ENCODE measurements at regions of chr19 and their contacts with region 1.

Region 1: GRCh38 chr19:18251587-18252369 is 22.5 kb downstream of the IQCN start:
- DNase-seq: peak; percentile 67 to 84 (median 76)
- H3K4me3 ChIP-seq: no peak overlapping the region
- H3K27ac ChIP-seq: no peak overlapping the region
- H3K4me1 ChIP-seq: peaks cover 0 to 8% (median 3%) of the 10 kb centered on the region in 4 experiments
- H3K27me3 ChIP-seq: peaks cover 0 to 21% (median 4%) of the 10 kb centered on the region in 5 experiments

Region 2: GRCh38 chr19:18179957-18180356 is 71.8 kb before region 1 on chr19:
- CTCF ChIA-PET with region 1: interaction called, 13 read pairs
- POLR2A ChIA-PET with region 1: interaction called, 5 read pairs
- DNase-seq: peak in 2 of 3 donors; percentile 61 to 65
- H3K4me3 ChIP-seq: no peak overlapping the region
- H3K27ac ChIP-seq: no peak overlapping the region
- H3K4me1 ChIP-seq: peaks cover 0 to 23% (median 11%) of the 10 kb centered on the region in 4 experiments
- H3K27me3 ChIP-seq: no peaks in the 10 kb centered on the region

Region 3: DNA sequence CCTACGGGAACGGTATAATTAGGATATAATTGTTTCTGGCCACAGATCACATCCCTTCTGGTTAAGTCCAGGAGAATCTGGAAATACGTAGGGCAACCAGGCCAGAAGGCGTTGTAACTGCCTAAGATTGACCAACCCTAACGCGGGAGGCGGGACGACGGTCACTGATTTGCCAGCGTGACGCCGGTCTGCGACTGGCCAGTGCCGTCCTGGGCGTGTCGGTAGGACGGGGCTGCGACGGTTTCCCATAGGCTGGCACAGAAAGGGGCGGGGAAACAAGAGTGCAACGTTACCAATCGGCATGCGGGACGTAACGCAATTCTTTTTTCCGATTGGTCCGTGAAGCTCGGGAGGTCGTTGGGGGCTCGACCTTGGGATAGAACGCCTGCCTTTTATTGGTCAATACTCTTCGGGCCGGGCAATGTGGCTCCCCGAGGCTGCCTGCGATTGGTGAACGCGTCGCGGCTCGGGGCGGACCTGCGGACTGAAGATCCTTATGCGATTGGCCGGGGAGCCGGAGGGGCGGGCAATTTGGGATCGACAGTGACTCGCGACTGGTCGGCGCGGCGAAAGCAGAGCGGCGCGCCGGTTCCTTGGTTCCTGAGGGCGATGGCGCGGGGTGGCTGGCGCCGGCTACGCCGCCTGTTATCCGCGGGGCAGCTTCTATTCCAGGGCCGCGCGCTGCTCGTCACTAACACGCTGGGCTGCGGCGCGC is 58.9 kb before region 1 on chr19 and contains the start of gene MPV17L2:
- CTCF ChIA-PET with region 1: interaction called, 49 read pairs
- POLR2A ChIA-PET with region 1: interaction called, 3 read pairs
- DNase-seq: peak; percentile 100
- H3K4me3 ChIP-seq: peak within 1 kb of the TSS; percentile 55 to 89 (median 86)
- H3K27ac ChIP-seq: peak within 1 kb of the TSS; percentile 33 to 68
- H3K4me1 ChIP-seq: peaks cover 9 to 28% (median 23%) of the 10 kb centered on the region in 4 experiments
- H3K27me3 ChIP-seq: no peaks in the 10 kb centered on the region

Region 4: DNA sequence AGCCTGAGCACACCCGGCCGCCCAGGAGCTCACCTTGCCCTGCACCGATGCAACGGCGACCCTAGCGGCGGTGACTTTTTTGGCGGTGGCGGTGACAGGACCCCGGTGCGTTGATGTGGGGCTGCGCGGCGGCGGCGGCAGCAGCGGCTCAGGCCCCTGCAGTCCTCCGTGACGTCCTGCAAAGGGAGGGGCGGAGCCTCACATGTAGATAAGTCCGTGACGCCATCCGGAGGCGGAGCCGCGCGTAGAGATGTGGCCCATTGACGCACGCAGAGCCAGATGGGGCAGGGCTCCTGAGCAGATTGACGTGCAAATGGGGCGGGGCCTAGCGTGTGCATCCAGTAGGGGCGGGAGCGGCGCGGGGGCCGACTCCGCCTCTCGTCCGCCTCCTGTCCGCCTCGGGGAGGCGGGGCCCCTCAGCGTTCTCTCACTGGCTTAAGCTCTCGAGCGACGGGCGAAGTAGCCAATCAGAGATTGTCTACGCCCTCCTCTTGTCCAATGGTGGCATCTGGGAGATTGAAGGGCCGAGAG is 47.9 kb before region 1 on chr19 and contains the start of gene RAB3A:
- CTCF ChIA-PET with region 1: interaction called, 139 read pairs
- POLR2A ChIA-PET with region 1: no interaction called
- DNase-seq: peak; percentile 100
- H3K4me3 ChIP-seq: peak within 1 kb of the TSS; percentile 49 to 92 (median 75)
- H3K27ac ChIP-seq: peak within 1 kb of the TSS; percentile 54 to 89
- H3K4me1 ChIP-seq: peaks cover 0 to 30% (median 28%) of the 10 kb centered on the region in 4 experiments
- H3K27me3 ChIP-seq: no peaks in the 10 kb centered on the region

Region 5: DNA sequence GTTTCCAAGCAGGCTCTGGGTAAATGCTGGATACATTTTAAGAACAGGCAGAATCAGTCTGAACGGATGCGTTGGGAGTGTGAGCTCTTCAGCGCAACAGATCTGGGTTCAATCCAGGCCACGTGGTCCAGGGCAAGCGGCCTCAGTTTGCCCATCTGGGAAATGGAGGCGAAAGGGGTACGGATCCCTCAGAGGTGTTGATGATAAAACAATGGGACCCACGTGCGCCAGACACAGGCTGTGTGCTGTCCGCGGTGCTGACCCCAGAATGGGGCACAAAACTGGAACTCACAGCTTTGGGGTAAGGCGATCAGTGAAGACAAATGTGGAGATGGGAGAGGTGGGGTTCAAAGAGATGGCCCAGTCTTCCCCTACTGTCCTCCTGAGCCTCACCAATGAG is 12.5 kb before region 1 on chr19:
- CTCF ChIA-PET with region 1: interaction called, 20 read pairs
- POLR2A ChIA-PET with region 1: no interaction called
- DNase-seq: peak in 1 of 3 donors; percentile 44
- H3K4me3 ChIP-seq: no peak overlapping the region
- H3K27ac ChIP-seq: no peak overlapping the region
- H3K4me1 ChIP-seq: no peaks in the 10 kb centered on the region
- H3K27me3 ChIP-seq: peaks cover 0 to 19% (median 5%) of the 10 kb centered on the region in 5 experiments

Region 6: GRCh38 chr19:18328340-18329034 is 76.7 kb after region 1 on chr19:
- CTCF ChIA-PET with region 1: interaction called, 17 read pairs
- POLR2A ChIA-PET with region 1: no interaction called
- DNase-seq: peak; percentile 93 to 96 (median 94)
- H3K4me3 ChIP-seq: peak overlapping the region; percentile 11 to 77 (median 55)
- H3K27ac ChIP-seq: peak overlapping the region in 1 of 2 experiments; percentile 52
- H3K4me1 ChIP-seq: peaks cover 6 to 19% (median 12%) of the 10 kb centered on the region in 4 experiments
- H3K27me3 ChIP-seq: no peaks in the 10 kb centered on the region

Measured in common myeloid progenitor, CD34-positive (primary cell).